ENCODE measurements at regions of chr10 and their contacts with region 1.

Region 1: GRCh38 chr10:102802920-102803534 is 34.2 kb downstream of the CYP17A1 start:
- DNase-seq: peak; percentile 27
- H3K4me3 Mint-ChIP-seq: peak overlapping the region; percentile 76
- H3K27ac Mint-ChIP-seq: peak overlapping the region; percentile 98
- H3K4me1 Mint-ChIP-seq: peaks cover 34% of the 10 kb centered on the region
- H3K27me3 Mint-ChIP-seq: no peaks in the 10 kb centered on the region

Region 2: DNA sequence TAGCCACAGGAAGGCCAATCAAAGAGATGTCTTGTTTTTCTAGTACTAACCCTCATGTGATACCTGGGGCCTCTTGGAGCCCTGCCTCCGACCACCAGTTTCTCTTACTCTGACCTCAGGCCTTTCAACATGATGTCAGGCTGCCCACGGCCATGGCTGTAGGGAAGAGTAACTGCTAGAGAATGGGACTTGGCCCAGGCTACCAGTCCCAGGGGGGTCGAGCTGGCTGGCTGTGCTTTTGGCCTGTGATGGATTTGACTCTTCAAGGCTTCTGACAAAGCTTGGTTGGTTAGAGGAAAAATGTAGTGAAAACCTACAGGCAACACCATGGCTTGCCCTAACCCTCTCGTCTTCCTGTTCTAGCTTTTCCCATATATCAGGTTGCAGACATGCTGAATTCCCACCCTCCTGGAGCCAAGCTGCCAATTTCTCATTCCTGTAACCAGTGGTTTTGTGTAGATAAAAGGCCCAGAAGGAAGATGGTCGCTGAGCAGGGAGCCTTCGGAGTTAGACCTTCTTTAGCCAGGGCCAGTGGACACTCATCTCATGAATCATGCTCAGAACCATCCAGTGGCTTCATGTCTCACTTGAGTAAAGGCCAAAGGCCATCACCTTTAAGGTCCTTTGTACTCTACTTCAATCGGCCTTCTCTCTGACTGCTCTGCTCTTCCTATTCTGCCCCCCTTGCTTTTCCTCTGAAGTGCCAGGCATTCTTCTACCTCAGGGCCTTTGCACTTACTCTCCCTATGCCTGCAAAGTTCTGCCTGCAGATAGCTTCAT is 279.6 kb before region 1 on chr10:
- intact Hi-C with region 1: no loop called
- DNase-seq: no peak
- H3K4me3 Mint-ChIP-seq: no peak overlapping the region
- H3K27ac Mint-ChIP-seq: no peak overlapping the region
- H3K4me1 Mint-ChIP-seq: no peaks in the 10 kb centered on the region
- H3K27me3 Mint-ChIP-seq: peaks cover 2% of the 10 kb centered on the region

Region 3: DNA sequence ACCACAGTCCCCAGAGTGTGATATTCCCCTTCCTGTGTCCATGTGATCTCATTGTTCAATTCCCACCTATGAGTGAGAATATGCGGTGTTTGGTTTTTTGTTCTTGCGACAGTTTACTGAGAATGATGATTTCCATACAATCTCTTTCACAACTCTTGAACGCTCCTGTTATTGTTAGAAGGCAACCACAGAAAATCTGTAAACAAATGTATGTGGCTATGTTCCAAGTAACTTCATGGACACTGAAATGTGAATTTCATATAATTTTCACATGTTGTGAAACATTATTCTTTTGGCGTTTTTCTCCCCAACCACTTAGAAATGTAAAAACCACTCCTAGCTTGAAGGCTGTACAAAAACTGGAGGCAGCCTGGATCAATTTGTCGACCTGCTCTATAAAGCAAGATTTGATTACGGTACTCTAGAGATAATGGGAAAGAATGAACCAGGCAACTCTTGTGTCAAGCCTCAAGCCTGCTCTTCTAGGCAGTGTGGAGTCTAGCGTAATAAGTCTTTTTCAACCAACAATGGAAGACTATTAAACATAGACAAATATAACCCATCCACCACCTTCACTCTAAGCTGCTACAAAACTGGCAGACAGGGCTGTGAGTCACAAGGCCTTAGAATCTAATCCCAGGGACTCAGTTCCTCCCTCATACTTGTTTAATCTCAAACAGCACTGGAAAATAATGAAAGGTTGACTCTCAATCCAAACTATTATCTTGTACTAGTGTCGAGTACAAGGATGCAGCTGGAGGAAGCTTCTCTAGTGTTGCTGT is 111.6 kb before region 1 on chr10:
- intact Hi-C with region 1: no loop called
- DNase-seq: no peak
- H3K4me3 Mint-ChIP-seq: no peak overlapping the region
- H3K27ac Mint-ChIP-seq: no peak overlapping the region
- H3K4me1 Mint-ChIP-seq: no peaks in the 10 kb centered on the region
- H3K27me3 Mint-ChIP-seq: no peaks in the 10 kb centered on the region

Region 4: GRCh38 chr10:102776779-102777456 is 26.1 kb before region 1 on chr10:
- intact Hi-C with region 1: loop called (anchors 2 kb)
- DNase-seq: no peak
- H3K4me3 Mint-ChIP-seq: no peak overlapping the region
- H3K27ac Mint-ChIP-seq: no peak overlapping the region
- H3K4me1 Mint-ChIP-seq: peaks cover 55% of the 10 kb centered on the region
- H3K27me3 Mint-ChIP-seq: no peaks in the 10 kb centered on the region

Region 5: GRCh38 chr10:102835007-102835482 is 32.0 kb after region 1 on chr10:
- intact Hi-C with region 1: no loop called
- DNase-seq: peak; percentile 63
- H3K4me3 Mint-ChIP-seq: no peak overlapping the region
- H3K27ac Mint-ChIP-seq: no peak overlapping the region
- H3K4me1 Mint-ChIP-seq: peaks cover 7% of the 10 kb centered on the region
- H3K27me3 Mint-ChIP-seq: peaks cover 12% of the 10 kb centered on the region

Region 6: GRCh38 chr10:102951316-102951715 is 148.3 kb after region 1 on chr10:
- intact Hi-C with region 1: no loop called
- DNase-seq: no peak
- H3K4me3 Mint-ChIP-seq: no peak overlapping the region
- H3K27ac Mint-ChIP-seq: no peak overlapping the region
- H3K4me1 Mint-ChIP-seq: no peaks in the 10 kb centered on the region
- H3K27me3 Mint-ChIP-seq: no peaks in the 10 kb centered on the region